ENCODE measurements at regions of chr3 and their contacts with region 1.

Region 1: GRCh38 chr3:84666468-84666867 is 292.3 kb upstream of the CADM2 start:
- DNase-seq: no peak
- ATAC-seq: no peak
- H3K4me3 ChIP-seq: no peak overlapping the region
- H3K4me3 Mint-ChIP-seq: no peak overlapping the region
- H3K27ac ChIP-seq: no peak overlapping the region
- H3K27ac Mint-ChIP-seq: no peak overlapping the region
- H3K4me1 ChIP-seq: no peaks in the 10 kb centered on the region
- H3K4me1 Mint-ChIP-seq: no peaks in the 10 kb centered on the region
- H3K27me3 ChIP-seq: no peaks in the 10 kb centered on the region
- H3K27me3 Mint-ChIP-seq: no peaks in the 10 kb centered on the region
- CTCF ChIP-seq: no peak

Region 2: DNA sequence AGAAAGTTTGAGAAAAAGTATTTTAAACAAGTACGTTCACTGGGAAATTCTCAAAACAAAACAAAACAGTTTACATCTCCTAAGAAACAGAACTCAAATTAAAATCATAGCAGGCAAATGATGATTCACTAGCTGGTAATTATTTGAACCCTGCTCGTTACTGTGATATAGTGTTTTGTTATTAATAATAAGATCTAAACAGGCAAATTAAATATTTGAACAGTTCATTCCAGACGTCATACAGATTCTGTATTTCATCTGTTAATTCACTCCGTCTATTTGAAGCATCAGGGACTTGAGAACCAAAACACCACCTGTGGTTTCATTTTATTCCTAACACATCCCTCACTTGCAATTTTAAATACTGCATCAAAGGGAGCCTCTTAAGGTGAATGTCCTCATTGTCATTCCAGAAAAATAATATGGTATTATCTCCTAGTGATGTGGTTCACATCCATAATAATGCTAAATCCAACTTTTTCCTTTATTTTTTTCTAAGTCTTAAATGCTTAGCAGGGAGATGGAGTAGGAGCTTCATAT is 1098.6 kb before region 1 on chr3:
- CTCF ChIA-PET with region 1: no interaction called
- POLR2A ChIA-PET with region 1: no interaction called
- intact Hi-C with region 1: loop called in 1 of 2 experiments (anchors 5 kb)
- DNase-seq: no peak
- ATAC-seq: no peak
- H3K4me3 ChIP-seq: no peak overlapping the region
- H3K4me3 Mint-ChIP-seq: no peak overlapping the region
- H3K27ac ChIP-seq: no peak overlapping the region
- H3K27ac Mint-ChIP-seq: no peak overlapping the region
- H3K4me1 ChIP-seq: no peaks in the 10 kb centered on the region
- H3K4me1 Mint-ChIP-seq: no peaks in the 10 kb centered on the region
- H3K27me3 ChIP-seq: no peaks in the 10 kb centered on the region
- H3K27me3 Mint-ChIP-seq: no peaks in the 10 kb centered on the region
- CTCF ChIP-seq: no peak

Region 3: GRCh38 chr3:84789961-84790360 is 123.5 kb after region 1 on chr3:
- CTCF ChIA-PET with region 1: no interaction called
- POLR2A ChIA-PET with region 1: no interaction called
- intact Hi-C with region 1: no loop called
- DNase-seq: no peak
- ATAC-seq: no peak
- H3K4me3 ChIP-seq: no peak overlapping the region
- H3K4me3 Mint-ChIP-seq: no peak overlapping the region
- H3K27ac ChIP-seq: no peak overlapping the region
- H3K27ac Mint-ChIP-seq: no peak overlapping the region
- H3K4me1 ChIP-seq: no peaks in the 10 kb centered on the region
- H3K4me1 Mint-ChIP-seq: no peaks in the 10 kb centered on the region
- H3K27me3 ChIP-seq: no peaks in the 10 kb centered on the region
- H3K27me3 Mint-ChIP-seq: no peaks in the 10 kb centered on the region
- CTCF ChIP-seq: no peak

Region 4: DNA sequence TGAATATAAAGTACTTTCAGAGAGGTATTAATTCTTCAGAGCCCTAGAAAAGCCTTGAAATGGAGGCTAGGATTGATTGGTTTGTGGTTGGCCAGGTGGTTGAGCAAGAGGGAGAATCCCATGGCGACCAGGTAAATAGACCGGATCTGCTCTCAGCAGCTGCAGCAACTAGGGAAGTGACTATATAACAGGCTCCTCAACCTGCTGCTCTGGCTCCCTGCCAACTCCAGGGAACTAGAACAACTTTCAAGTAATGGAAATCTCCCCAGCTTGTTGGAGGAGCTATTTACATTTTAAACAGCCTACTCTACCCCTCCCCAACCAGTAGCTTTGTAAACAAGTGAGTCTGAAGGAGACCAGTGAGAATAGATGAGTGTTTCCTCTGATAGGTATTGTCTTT is 170.5 kb after region 1 on chr3:
- CTCF ChIA-PET with region 1: no interaction called
- POLR2A ChIA-PET with region 1: no interaction called
- intact Hi-C with region 1: no loop called
- DNase-seq: no peak
- ATAC-seq: no peak
- H3K4me3 ChIP-seq: no peak overlapping the region
- H3K4me3 Mint-ChIP-seq: no peak overlapping the region
- H3K27ac ChIP-seq: no peak overlapping the region
- H3K27ac Mint-ChIP-seq: no peak overlapping the region
- H3K4me1 ChIP-seq: no peaks in the 10 kb centered on the region
- H3K4me1 Mint-ChIP-seq: no peaks in the 10 kb centered on the region
- H3K27me3 ChIP-seq: no peaks in the 10 kb centered on the region
- H3K27me3 Mint-ChIP-seq: no peaks in the 10 kb centered on the region
- CTCF ChIP-seq: no peak